ENCODE measurements at regions of chr3 and their contacts with region 1.

Region 1: DNA sequence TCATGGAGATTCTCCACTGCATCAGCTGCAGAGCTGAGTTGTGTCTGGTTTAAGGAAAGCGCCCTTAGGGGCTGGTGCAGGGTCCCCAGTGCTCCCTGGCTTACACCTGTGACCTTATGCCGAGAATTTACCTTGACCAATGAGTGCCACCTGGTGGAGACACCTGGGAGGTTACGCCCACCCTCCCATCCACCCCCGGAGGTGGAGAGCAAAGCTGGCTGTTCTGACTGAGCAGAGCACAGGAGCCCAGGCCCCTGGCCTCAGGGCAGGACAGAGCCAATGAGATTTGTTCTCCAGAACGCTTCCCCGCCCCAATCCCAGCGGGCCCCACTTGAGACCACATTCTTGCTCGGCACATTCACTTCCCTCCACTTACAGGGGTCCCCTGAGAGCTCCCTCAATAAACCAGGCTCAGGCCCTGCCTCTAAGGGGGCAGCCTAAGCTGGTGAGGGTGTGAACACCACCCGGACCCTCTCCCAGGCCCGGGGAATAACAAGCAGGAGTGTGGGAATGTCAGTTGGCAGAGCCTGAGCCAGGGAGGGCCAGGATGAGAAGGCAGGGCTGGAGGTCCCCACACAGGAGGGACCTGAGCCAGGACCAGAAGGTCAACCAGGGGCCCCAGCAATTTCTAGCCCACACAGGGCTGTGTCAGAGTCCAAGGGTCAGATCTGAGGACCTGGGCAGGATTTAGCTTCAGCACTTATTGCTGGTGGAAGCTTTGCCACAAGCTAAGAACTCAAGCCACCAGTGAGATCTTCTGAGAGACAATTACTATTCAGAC is 117.1 kb downstream of the TPRA1 start:
- DNase-seq: peak; percentile 27
- ATAC-seq: peak; percentile 94
- H3K4me3 ChIP-seq: no peak overlapping the region
- H3K27ac ChIP-seq: no peak overlapping the region
- H3K4me1 ChIP-seq: peaks cover 0 to 4% of the 10 kb centered on the region in 2 experiments; a peak in 1 of 4 replicates
- H3K27me3 ChIP-seq: peaks cover 3% of the 10 kb centered on the region; the same call in 1 of the 2 replicates
- CTCF ChIP-seq: peak; percentile 60 to 78 (median 64); a peak in 5 of 6 replicates
- POLR2A ChIP-seq: no peak
- RAD21 ChIP-seq: peak; percentile 80

Region 2: GRCh38 chr3:126679318-126679751 is 794.1 kb before region 1 on chr3:
- CTCF ChIA-PET with region 1: no interaction called
- POLR2A ChIA-PET with region 1: no interaction called
- RAD21 ChIA-PET with region 1: interaction called in 1 of 2 experiments, 6 read pairs
- intact Hi-C with region 1: loop called (anchors 2 kb)
- DNase-seq: peak; percentile 68
- ATAC-seq: peak; percentile 99
- H3K4me3 ChIP-seq: no peak overlapping the region
- H3K27ac ChIP-seq: no peak overlapping the region
- H3K4me1 ChIP-seq: peaks cover 0 to 8% of the 10 kb centered on the region in 2 experiments; a peak in 1 of 4 replicates
- H3K27me3 ChIP-seq: no peaks in the 10 kb centered on the region
- CTCF ChIP-seq: peak; percentile 90 to 91 (median 90)
- POLR2A ChIP-seq: no peak
- RAD21 ChIP-seq: peak; percentile 93

Region 3: DNA sequence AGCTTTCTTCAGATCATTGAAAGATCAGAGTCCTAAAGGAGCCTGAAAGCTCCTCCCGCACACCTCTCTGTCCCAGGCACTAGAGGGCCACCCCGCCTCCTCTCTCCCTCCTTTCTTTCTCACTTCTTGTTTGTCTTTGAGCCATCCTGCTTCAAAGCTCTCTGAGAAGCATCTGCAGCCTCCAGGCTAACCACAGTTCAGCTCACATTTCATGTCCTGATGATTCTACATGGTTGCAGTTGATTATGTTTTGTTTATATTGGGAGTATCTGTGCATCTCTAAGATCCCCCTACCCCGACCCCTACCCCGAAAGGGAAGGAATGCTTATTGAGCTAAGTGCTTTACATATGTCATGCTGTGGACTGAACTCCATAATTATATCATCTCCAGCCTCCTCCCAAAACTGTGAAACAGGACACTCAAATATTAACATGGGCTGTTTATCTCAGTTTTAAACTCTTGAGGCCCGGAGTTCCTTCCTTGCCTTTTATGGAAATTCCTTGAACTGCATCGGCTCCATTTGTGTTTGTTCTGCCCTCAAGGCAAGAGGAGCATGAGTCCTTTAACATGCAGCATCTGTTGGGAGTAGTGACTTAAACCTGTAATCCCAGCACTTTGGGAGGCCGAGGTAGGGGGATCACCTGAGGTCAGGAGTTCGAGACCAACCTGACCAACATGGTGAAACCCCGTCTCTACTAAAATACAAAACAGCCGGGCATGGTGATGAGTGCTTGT is 317.9 kb after region 1 on chr3:
- CTCF ChIA-PET with region 1: no interaction called
- POLR2A ChIA-PET with region 1: no interaction called
- RAD21 ChIA-PET with region 1: no interaction called
- intact Hi-C with region 1: no loop called
- DNase-seq: no peak
- ATAC-seq: peak; percentile 85
- H3K4me3 ChIP-seq: no peak overlapping the region
- H3K27ac ChIP-seq: no peak overlapping the region; the same call in 1 of the 2 replicates
- H3K4me1 ChIP-seq: peaks cover 6 to 50% of the 10 kb centered on the region in 2 experiments; a peak in 3 of 4 replicates
- H3K27me3 ChIP-seq: no peaks in the 10 kb centered on the region
- CTCF ChIP-seq: peak; percentile 41 to 53 (median 51); a peak in 5 of 6 replicates
- POLR2A ChIP-seq: no peak
- RAD21 ChIP-seq: peak; percentile 71